ENCODE measurements at regions of chr1 and their contacts with region 1.

Region 1: DNA sequence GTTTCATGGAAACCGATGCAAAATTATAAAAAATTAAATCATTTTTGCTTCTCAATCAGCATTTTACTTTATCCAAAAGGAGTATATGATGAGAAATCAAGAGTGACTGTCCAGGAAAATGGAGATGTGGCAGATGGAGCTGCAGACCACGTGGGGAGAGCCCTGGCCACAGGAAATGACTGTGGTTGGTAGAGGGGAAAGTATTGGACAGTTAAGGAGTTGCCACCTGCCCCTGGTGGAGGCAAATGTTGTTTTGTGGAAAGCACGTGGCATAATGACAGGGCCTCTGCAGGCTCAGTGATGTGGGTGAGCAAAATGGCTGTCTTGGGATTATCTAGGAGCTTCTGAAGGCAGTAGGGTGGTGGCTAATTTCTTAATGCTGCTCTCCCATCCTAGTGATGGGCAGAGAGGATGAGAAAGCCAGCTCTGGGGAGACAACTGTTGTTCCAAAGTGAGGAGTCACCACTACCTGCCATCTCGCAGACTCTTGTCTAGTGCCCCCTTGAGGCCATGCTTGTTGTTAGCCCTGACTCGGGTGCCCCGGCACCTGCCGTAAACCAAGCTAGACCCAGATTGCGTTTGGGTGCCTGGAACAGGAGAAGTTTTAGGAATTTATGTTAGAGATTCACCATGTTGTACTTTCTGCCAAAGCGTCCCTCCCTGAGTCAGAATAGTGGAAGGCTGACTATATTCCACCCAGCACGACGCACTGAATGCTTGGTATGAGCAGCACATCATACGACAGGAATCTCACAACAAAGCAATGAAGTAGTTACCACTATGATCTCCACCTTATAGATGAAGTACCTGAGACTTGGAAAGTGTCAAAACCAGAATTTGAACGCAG is 144.0 kb downstream of the ROR1 start:
- DNase-seq: peak; percentile 21 to 55 (median 42)
- ATAC-seq: peak; percentile 84
- H3K4me3 ChIP-seq: no peak overlapping the region
- H3K27ac ChIP-seq: no peak overlapping the region
- H3K4me1 ChIP-seq: no peaks in the 10 kb centered on the region
- H3K27me3 ChIP-seq: 0 out of 5 replicates have a peak, but pooled peaks cover 0 to 5% of the 10 kb centered on the region in 2 experiments
- CTCF ChIP-seq: peak; percentile 38 to 61 (median 51); a peak in 4 of 6 replicates
- EP300 ChIP-seq: no peak
- POLR2A ChIP-seq: no peak
- RAD21 ChIP-seq: no peak

Region 2: DNA sequence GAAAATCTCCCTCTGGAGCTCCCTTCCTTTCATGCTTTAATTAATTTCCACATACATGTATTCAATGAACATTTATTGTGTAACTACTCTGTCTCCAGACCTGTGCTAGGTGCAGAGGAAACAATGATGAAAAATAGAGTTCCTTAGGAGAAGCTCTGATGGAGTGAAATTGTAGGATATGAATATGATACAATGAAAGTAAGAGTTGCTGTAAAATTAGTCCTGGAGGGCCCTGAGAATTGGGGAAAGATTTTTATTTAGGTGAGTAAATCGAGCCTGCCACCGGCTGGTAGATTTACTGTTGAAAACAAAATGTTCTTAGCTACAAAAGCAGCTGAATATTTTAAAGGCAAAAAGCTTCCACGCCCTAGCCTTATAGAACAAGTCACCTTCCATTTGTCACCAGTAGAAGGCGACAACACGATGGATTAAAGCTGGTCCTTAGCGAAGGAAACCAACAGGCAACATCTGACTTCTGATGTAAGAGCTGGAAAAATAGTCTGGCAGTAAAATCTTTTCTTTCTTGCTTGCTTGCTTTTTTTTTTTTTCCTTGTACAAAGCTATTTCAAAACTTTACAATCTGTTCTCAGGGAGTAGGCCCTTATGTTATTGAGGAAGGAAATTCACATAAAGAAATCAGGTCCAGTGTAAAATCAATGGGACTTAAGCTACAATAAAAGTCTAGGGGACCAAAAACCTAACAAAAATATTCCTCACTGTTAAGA is 225.9 kb before region 1 on chr1:
- CTCF ChIA-PET with region 1: no interaction called
- POLR2A ChIA-PET with region 1: no interaction called
- in situ Hi-C with region 1: no loop called
- intact Hi-C with region 1: loop called (anchors 10 kb)
- DNase-seq: peak; percentile 47 to 61 (median 54)
- ATAC-seq: peak; percentile 98
- H3K4me3 ChIP-seq: no peak overlapping the region
- H3K27ac ChIP-seq: no peak overlapping the region
- H3K4me1 ChIP-seq: no peaks in the 10 kb centered on the region
- H3K27me3 ChIP-seq: no peaks in the 10 kb centered on the region
- CTCF ChIP-seq: peak; percentile 62 to 83 (median 71); a peak in 5 of 6 replicates
- EP300 ChIP-seq: peak; percentile 65
- POLR2A ChIP-seq: no peak
- RAD21 ChIP-seq: peak; percentile 56 to 78

Region 3: GRCh38 chr1:63955370-63956145 is 37.8 kb after region 1 on chr1:
- CTCF ChIA-PET with region 1: no interaction called
- POLR2A ChIA-PET with region 1: no interaction called
- in situ Hi-C with region 1: no loop called
- intact Hi-C with region 1: no loop called
- DNase-seq: no peak
- ATAC-seq: no peak
- H3K4me3 ChIP-seq: no peak overlapping the region
- H3K27ac ChIP-seq: no peak overlapping the region
- H3K4me1 ChIP-seq: no peaks in the 10 kb centered on the region
- H3K27me3 ChIP-seq: no peaks in the 10 kb centered on the region; a peak in 1 of 5 replicates
- CTCF ChIP-seq: no peak
- EP300 ChIP-seq: no peak
- POLR2A ChIP-seq: no peak
- RAD21 ChIP-seq: no peak

Measured in K562 (cell line).